Right lobe of liver (tissue), 6 donors: ENCODE measurements at regions of chr18 and their contacts with region 1.

Region 1: GRCh38 chr18:58186258-58186948 is 142.4 kb downstream of the NEDD4L start:
- DNase-seq: no peak
- ATAC-seq: no peak
- H3K4me3 ChIP-seq: no peak overlapping the region
- H3K27ac ChIP-seq: no peak overlapping the region
- H3K4me1 ChIP-seq: no peaks in the 10 kb centered on the region
- H3K27me3 ChIP-seq: no peaks in the 10 kb centered on the region
- CTCF ChIP-seq: no peak
- POLR2A ChIP-seq: no peak

Region 2: GRCh38 chr18:58038063-58038462 is 148.3 kb before region 1 on chr18:
- intact Hi-C with region 1: loop called in 1 of 2 experiments (anchors 5 kb)
- DNase-seq: no peak
- ATAC-seq: peak in 2 of 4 donors; percentile 13 to 30
- H3K4me3 ChIP-seq: no peak overlapping the region
- H3K27ac ChIP-seq: no peak overlapping the region
- H3K4me1 ChIP-seq: peaks cover 0 to 3% (median 0%) of the 10 kb centered on the region in 4 donors
- H3K27me3 ChIP-seq: no peaks in the 10 kb centered on the region
- CTCF ChIP-seq: no peak
- POLR2A ChIP-seq: no peak

Region 3: GRCh38 chr18:58584200-58585127 is 398.1 kb after region 1 on chr18:
- intact Hi-C with region 1: no loop called
- DNase-seq: no peak
- ATAC-seq: no peak
- H3K4me3 ChIP-seq: no peak overlapping the region
- H3K27ac ChIP-seq: no peak overlapping the region
- H3K4me1 ChIP-seq: peaks cover 0 to 7% (median 0%) of the 10 kb centered on the region in 4 donors
- H3K27me3 ChIP-seq: no peaks in the 10 kb centered on the region
- CTCF ChIP-seq: no peak
- POLR2A ChIP-seq: no peak